Tibial artery (tissue), 4 donors: ENCODE measurements at regions of chr11 and their contacts with region 1.

Region 1: DNA sequence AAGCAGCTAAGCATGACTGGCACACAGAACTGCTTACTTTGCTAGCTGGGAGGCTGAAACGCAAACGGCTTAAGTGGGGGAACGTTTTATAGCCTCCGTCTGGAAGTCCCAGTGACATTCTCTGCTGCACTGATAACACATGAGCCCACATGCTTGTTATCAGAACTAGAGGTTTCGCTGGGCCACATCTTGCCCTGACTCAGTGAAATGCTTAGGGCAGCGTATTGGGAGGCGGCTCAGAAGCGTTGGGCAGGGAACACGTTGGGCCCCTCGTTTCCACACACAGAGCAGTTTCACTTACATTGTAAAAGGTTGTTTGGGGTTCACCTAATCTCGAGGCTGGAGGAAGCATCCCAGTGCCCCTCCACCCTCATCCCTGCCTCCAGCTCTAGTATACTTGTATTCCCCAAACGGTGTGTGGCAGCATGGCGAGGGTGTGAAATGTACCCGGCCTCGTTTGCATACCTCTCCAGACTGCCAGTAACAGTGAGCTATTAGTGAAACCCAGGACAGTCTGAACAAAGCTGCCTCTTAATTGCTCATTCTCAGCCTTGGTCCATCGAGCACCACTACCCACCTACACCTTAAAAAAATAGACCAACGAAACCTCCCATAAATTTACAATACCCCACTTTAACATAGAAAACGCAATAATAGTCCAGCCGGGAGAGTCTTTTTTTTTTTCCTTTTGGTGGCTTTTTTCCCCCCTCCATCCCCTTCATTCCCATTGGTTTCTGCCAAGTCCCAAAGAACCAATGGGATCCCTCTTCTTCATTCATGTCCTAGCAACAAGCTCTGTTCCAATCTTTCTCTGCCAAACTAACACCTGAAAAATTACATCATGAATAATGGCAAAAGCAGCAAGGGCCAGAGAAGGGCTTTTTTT is 218.8 kb upstream of the SORL1-AS1 start:
- DNase-seq: no peak
- H3K4me3 ChIP-seq: peak overlapping the region in 1 of 2 donors; percentile 3
- H3K27ac ChIP-seq: peak overlapping the region; percentile 72 to 75
- H3K4me1 ChIP-seq: peaks cover 0 to 32% (median 21%) of the 10 kb centered on the region in 4 donors
- H3K27me3 ChIP-seq: no peaks in the 10 kb centered on the region
- CTCF ChIP-seq: no peak

Region 2: DNA sequence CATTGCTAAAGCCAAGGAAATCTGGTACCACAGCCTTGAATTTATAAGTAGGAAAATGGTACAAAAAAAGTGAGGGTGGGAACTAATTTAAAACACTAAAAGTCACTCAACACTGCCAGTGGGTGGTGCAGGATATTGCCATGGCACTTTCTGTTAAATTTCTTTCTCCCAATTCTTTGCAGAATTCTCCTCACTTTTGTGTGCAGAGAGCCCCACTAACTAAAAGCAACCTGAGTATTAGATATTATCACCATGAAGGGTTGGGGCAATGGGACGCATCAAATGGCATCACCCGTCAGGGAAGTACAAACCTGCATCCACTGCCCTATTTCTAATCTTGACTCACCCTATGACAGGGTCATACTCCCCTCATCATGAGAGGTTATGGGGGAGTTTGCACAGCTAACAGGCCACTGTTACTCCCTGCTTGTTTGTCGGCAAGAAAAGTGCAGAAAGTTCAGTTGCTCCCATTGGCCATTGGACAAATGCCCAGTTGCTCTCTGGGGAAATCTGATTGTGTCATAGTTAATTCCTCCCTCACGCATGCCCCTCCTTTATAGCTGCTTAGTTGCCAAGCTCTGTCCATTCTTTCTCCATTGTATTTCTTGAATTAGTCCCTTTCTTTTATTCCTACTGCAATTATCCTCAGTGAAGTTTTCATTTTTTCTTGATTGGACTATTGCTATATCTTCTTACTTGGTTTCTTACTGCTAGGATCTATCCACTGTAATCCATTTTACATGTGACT is 538.3 kb after region 1 on chr11:
- intact Hi-C with region 1: loop called (anchors 5 kb)
- DNase-seq: peak; percentile 84 to 91
- H3K4me3 ChIP-seq: no peak overlapping the region
- H3K27ac ChIP-seq: peak overlapping the region; percentile 76 to 77
- H3K4me1 ChIP-seq: peaks cover 0 to 85% (median 55%) of the 10 kb centered on the region in 4 donors
- H3K27me3 ChIP-seq: no peaks in the 10 kb centered on the region
- CTCF ChIP-seq: no peak